Activated naive CD8-positive, alpha-beta T cell treated with anti-CD3 and anti-CD28 coated beads, Interleukin-2, amount 10 ng/mL, durations not matched to agents 7 days and 5 days (primary cell): ENCODE measurements at regions of chr14 and their contacts with region 1.

Region 1: GRCh38 chr14:102362545-102363181 is at the starts of genes CINP and TECPR2:
- DNase-seq: peak; percentile 95
- ATAC-seq: peak; percentile 92
- H3K4me3 Mint-ChIP-seq: peak within 1 kb of the TSS; percentile 91
- H3K27ac Mint-ChIP-seq: peak within 1 kb of the TSS; percentile 86
- H3K4me1 Mint-ChIP-seq: peaks cover 31% of the 10 kb centered on the region
- H3K27me3 Mint-ChIP-seq: no peaks in the 10 kb centered on the region
- total RNA-seq, gene CINP: 29.8 to 35.6 TPM
- total RNA-seq, gene TECPR2: 9.8 to 10.2 TPM

Region 2: DNA sequence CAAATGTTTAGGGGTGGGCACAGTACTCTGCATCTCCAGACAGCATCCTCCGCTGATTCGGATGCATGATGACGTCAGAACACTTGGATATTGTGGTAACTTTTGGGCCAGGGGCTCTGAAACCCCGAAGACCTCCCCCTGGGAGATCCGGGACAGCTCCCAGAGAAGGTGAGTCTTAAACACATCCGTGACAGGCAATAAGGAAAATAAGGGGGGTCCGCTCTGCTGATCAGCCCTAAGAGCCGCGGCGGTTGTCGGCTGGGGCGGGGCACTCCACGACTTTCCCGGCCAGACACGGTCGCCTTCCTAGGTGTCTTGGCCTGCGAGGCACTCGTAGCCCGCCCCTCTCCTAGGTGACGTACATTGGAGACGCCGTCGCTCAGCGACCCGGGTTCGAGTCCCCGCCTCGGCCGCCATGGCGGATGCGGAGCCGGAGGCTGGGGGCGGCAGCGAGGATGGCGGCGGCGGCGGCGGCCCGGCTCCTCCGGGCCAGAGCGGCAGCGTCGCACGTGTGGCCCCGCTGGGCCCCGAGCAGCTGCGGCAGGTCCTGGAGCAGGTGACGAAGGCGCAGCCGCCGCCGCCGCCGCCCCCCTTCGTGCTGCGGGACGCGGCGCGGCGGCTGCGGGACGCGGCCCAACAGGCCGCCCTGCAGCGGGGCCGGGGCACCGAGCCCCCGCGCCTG is 43.2 kb before region 1 on chr14 and contains the start of gene ZNF839:
- POLR2A ChIA-PET with region 1: interaction called, 13 read pairs
- DNase-seq: peak; percentile 98
- ATAC-seq: peak; percentile 71
- H3K4me3 Mint-ChIP-seq: peak within 1 kb of the TSS; percentile 95
- H3K27ac Mint-ChIP-seq: peak within 1 kb of the TSS; percentile 91
- H3K4me1 Mint-ChIP-seq: peaks cover 35% of the 10 kb centered on the region
- H3K27me3 Mint-ChIP-seq: no peaks in the 10 kb centered on the region
- total RNA-seq, gene ZNF839: 13.9 to 17.3 TPM